Ascending aorta (tissue), 2 donors: ENCODE measurements at regions of chr20 and their contacts with region 1.

Region 1: GRCh38 chr20:44187051-44187762 is at the start of gene JPH2:
- DNase-seq: peak; percentile 60 to 90
- H3K4me3 ChIP-seq: peak within 1 kb of the TSS; percentile 61 to 82
- H3K27ac ChIP-seq: peak within 1 kb of the TSS; percentile 89 to 95
- H3K4me1 ChIP-seq: peaks cover 11 to 14% of the 10 kb centered on the region in 2 donors
- H3K27me3 ChIP-seq: no peaks in the 10 kb centered on the region
- CTCF ChIP-seq: no peak
- total RNA-seq, gene JPH2: 86.7 TPM

Region 2: DNA sequence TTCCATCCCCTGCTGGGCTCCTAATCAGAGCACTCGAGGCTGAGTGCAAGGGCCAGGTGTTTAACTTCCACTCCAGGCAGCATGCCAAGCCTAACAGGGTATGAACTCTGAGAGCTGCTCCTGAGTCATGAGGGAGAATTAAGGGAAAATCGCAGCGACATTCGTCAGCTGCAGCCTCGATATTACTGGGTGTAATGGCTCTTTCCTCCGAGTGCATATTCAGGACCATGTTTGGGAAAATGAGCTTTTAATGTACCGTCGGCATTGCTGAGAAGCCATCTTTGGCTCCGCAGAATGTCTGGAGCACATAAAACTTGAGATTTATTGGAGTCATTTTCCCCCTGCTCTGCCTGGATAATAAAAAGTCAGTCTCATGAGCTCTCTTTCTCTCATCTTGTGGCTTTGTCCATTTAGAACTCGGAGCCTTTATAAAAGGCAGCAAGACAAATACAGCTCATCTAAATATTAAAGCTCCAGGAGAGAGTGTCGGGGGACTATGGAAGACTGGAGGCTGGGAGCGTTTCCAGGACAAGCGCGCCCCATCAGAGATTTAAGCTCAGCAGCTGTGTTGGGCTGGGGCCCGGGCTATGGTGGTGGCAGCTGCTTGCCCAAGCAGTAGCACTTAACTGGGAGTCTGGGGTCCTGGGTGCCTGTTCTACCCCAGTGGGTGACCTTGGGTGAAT is 168.8 kb before region 1 on chr20:
- intact Hi-C with region 1: loop called (anchors 10 kb)
- DNase-seq: peak; percentile 31 to 83
- H3K4me3 ChIP-seq: peak overlapping the region in 1 of 2 donors; percentile 47
- H3K27ac ChIP-seq: peak overlapping the region; percentile 65 to 70
- H3K4me1 ChIP-seq: peaks cover 11 to 20% of the 10 kb centered on the region in 2 donors
- H3K27me3 ChIP-seq: no peaks in the 10 kb centered on the region
- CTCF ChIP-seq: no peak

Region 3: GRCh38 chr20:44115762-44116644 is 71.2 kb before region 1 on chr20:
- intact Hi-C with region 1: loop called (anchors 1 kb)
- DNase-seq: peak in 1 of 2 donors; percentile 58
- H3K4me3 ChIP-seq: no peak overlapping the region
- H3K27ac ChIP-seq: peak overlapping the region in 1 of 2 donors; percentile 14
- H3K4me1 ChIP-seq: peaks cover 5 to 13% of the 10 kb centered on the region in 2 donors
- H3K27me3 ChIP-seq: no peaks in the 10 kb centered on the region
- CTCF ChIP-seq: no peak

Region 4: GRCh38 chr20:44137210-44137801 is 49.9 kb before region 1 on chr20:
- intact Hi-C with region 1: loop called (anchors 2 kb)
- DNase-seq: peak in 1 of 2 donors; percentile 79
- H3K4me3 ChIP-seq: peak overlapping the region in 1 of 2 donors; percentile 28
- H3K27ac ChIP-seq: peak overlapping the region; percentile 92
- H3K4me1 ChIP-seq: peaks cover 8 to 30% of the 10 kb centered on the region in 2 donors
- H3K27me3 ChIP-seq: no peaks in the 10 kb centered on the region
- CTCF ChIP-seq: no peak

Region 5: GRCh38 chr20:44153636-44154043 is 33.6 kb before region 1 on chr20:
- intact Hi-C with region 1: loop called (anchors 1 kb)
- DNase-seq: peak in 1 of 2 donors; percentile 83
- H3K4me3 ChIP-seq: peak overlapping the region in 1 of 2 donors; percentile 34
- H3K27ac ChIP-seq: peak overlapping the region; percentile 94 to 95
- H3K4me1 ChIP-seq: peaks cover 23 to 56% of the 10 kb centered on the region in 2 donors
- H3K27me3 ChIP-seq: no peaks in the 10 kb centered on the region
- CTCF ChIP-seq: peak in 1 of 3 experiments; percentile 10

Region 6: DNA sequence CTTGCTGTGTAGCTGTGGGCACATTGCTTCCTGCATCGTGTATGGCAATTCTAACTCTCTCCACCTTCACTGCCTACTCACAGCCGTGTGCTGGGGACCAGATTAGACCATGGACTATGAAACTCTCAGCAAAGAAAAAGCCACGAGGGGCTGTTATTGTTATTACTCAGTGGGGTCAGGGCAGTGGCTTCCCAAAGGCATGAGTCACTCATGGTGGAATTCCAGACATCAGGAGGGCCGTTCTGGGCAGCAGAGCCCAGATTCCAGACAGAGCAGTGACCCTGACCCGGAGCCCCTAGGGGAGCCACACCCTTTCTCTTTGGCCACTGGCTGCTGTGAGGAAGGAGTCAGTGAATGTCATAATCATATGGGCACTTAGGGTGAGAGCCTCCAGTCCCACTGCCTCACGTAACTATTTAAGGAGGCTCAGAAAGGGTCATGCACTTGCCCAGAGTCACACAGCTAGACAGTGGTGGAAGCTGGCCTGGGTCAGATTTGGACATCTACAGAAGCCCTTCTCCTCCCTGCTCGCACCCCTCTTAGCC is 505.8 kb after region 1 on chr20:
- intact Hi-C with region 1: loop called (anchors 10 kb)
- DNase-seq: peak; percentile 86 to 97
- H3K4me3 ChIP-seq: no peak overlapping the region
- H3K27ac ChIP-seq: peak overlapping the region; percentile 92 to 94
- H3K4me1 ChIP-seq: peaks cover 14 to 54% of the 10 kb centered on the region in 2 donors
- H3K27me3 ChIP-seq: no peaks in the 10 kb centered on the region
- CTCF ChIP-seq: no peak